Psoas muscle (tissue), 8 donors: ENCODE measurements at regions of chr3 and their contacts with region 1.

Region 1: DNA sequence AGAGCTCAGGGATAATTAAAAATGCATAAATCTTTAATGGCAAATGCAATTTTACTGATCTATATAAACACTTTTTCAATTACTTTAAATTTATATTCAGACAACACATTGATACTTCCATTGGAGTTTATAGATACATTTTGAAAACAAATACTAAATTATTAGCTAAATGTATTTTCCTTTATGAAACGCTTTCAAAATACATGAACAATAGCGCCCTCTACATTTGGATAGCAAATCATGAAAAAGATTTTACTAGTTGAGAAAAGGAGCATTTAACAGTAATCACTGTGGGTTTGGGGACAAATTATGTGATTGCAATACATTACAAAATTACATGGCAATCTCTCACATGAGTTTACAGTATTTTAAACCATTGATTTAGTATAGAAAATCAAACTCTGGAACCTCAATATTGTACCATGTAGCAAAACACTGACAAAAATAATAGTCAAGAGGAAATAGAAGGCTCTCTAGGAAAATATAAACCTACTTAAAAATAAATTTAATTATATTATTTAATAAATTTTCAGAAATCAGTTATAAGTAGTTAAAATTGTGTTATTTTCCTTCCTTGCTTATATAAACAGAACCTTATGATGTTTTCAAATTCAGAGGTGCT is 207.9 kb downstream of the ZIC1 start:
- DNase-seq: no peak
- ATAC-seq: no peak
- H3K4me3 ChIP-seq: no peak overlapping the region
- H3K27ac ChIP-seq: no peak overlapping the region
- H3K4me1 ChIP-seq: no peaks in the 10 kb centered on the region
- H3K27me3 ChIP-seq: no peaks in the 10 kb centered on the region
- CTCF ChIP-seq: peak; percentile 61

Region 2: GRCh38 chr3:146485297-146485696 is 1131.8 kb before region 1 on chr3:
- intact Hi-C with region 1: no loop called
- DNase-seq: no peak
- ATAC-seq: no peak
- H3K4me3 ChIP-seq: no peak overlapping the region
- H3K27ac ChIP-seq: no peak overlapping the region
- H3K4me1 ChIP-seq: no peaks in the 10 kb centered on the region
- H3K27me3 ChIP-seq: no peaks in the 10 kb centered on the region
- CTCF ChIP-seq: no peak

Region 3: DNA sequence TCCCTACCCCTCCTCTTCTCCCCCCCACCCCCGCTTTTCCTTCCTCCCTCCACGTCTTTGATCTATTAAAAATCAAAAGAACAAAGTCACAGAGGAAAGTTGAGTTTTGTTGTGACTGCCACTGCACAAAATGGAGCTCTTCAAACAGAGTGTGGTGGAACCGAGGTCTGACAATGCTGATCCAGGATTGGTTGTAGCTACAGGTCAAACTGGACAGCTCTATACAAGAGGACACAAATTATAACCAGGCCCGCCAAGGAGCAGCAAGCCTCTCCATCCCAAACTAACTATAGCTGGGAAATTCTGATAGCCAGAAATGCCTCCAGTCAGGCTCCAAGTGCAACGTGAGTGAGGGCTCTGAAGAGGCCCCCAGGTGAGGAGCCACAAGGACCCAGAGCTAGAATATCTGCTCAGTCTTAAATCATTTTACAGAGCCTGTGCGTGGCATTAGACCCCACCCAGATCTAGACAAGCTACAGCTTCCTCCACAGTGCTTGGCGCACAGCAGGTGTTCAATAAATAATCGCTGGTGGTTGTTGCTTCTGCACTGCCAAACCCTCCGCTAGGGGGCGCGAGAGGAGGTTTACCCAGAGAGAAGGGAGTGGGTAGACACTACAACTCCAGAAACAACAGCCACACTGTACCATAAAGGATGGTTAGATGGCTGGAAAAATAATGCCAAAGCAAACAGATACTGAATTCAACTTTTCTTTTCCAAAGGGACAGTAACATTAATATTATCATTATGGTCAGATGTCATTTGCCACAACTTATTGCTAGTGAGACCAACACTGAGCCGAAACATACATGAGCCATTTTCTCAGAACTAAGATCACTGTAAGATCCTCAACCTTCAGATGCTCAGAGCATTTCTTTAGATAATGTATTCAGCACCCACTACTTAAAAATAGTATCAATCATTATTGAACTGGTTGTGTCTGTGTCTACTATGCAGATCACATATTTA is 255.4 kb before region 1 on chr3:
- intact Hi-C with region 1: loop called in 1 of 2 experiments (anchors 10 kb)
- DNase-seq: peak; percentile 34 to 70
- ATAC-seq: peak in 2 of 4 donors; percentile 49 to 73
- H3K4me3 ChIP-seq: no peak overlapping the region
- H3K27ac ChIP-seq: no peak overlapping the region
- H3K4me1 ChIP-seq: no peaks in the 10 kb centered on the region
- H3K27me3 ChIP-seq: peaks cover 11 to 67% (median 28%) of the 10 kb centered on the region in 3 donors
- CTCF ChIP-seq: peak; percentile 61

Region 4: GRCh38 chr3:147418808-147419701 is 198.1 kb before region 1 on chr3:
- intact Hi-C with region 1: loop called in 1 of 2 experiments (anchors 10 kb)
- DNase-seq: peak; percentile 84 to 93
- ATAC-seq: peak; percentile 87 to 93 (median 92)
- H3K4me3 ChIP-seq: peak overlapping the region; percentile 75
- H3K27ac ChIP-seq: peak overlapping the region; percentile 70
- H3K4me1 ChIP-seq: peaks cover 5% of the 10 kb centered on the region
- H3K27me3 ChIP-seq: peaks cover 0 to 49% (median 11%) of the 10 kb centered on the region in 3 donors
- CTCF ChIP-seq: no peak

Region 5: DNA sequence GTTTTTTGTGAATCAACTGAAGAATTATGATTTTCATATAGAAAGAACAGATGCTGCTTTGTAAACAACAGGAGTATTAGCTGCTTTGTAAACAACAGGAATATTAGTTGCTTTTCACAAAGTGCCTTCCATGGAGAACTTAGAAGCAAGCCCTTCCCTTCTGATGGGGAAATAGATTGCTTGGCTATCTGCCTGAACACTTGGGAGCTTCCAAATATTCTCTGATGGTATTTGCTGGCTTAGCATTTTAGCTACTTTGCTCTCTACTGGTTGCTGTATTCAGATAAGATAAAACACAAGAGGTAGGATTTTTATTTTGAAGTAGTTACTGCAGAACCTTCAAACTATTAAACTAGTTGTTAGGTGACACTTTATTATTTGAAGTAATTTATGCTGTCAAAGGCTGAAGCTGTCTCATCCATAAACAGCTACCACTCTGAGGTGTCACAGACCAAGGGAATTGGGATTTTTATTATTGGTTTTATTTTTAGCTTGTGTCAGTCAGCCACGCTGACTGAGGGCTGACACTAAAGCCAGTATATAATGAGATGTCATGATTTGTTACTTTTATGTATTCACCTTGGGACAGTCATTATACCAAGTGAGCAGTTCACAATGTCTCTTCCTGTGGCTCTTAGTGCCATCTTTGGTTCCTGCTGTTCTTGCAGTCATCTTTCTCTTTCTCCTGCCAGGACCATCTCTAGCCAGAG is 158.0 kb before region 1 on chr3:
- intact Hi-C with region 1: no loop called
- DNase-seq: no peak
- ATAC-seq: no peak
- H3K4me3 ChIP-seq: no peak overlapping the region
- H3K27ac ChIP-seq: no peak overlapping the region
- H3K4me1 ChIP-seq: no peaks in the 10 kb centered on the region
- H3K27me3 ChIP-seq: no peaks in the 10 kb centered on the region
- CTCF ChIP-seq: no peak

Region 6: GRCh38 chr3:147630921-147631415 is 13.9 kb after region 1 on chr3:
- intact Hi-C with region 1: no loop called
- DNase-seq: no peak
- ATAC-seq: no peak
- H3K4me3 ChIP-seq: no peak overlapping the region
- H3K27ac ChIP-seq: no peak overlapping the region
- H3K4me1 ChIP-seq: no peaks in the 10 kb centered on the region
- H3K27me3 ChIP-seq: no peaks in the 10 kb centered on the region
- CTCF ChIP-seq: no peak